CD4-positive, alpha-beta memory T cell (primary cell): ENCODE measurements at regions of chr11 and their contacts with region 1.

Region 1: DNA sequence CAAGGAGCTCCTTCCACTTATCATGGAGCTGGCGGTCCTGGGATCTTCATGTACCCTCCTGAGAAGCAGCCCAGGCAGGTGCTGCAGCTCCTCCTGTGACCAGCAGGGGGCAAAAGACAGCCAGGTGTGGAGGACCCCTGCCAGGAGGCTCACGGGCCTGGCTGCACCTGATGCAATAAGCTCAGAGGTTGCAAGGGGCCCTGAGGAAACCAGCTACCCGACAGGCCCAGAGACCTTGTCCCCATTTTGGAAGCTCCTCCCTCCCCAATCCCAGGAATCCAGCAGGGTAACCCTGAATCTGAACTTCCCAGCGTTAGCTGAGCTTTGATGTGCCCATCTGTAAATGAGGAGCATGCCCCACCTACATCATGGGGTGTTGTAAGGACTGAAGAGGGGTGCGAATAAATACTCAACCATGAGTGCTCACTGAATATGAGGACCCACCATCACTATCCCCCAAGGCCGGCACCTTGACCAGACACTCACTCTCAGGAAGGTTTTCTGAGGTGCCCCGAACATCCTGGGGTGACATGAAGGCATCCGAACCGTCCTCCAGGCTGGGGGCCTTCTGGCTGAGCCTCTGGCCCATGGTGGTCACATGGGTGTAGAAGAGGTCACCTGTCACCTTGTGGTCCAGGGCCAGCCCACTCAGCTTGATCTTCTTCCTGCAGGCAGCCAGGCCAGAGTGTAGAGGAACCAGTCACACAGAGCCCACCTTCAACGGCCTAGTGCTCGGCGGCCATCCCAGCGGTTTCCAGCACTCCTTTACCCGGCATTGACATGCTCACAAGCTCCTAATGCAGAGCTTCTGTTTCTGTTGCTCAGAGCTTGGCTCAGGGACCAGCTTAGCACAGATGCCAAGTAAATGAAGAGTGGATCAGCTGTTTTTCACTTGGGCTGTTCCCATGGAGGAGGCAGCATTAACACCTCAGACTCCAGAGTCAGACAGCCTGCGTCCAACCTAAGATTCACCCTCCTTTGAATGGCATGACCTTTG is 21.7 kb downstream of the SLC43A1 start:
- DNase-seq: peak; percentile 64 to 74 (median 67)
- H3K4me3 ChIP-seq: no peak overlapping the region
- H3K4me3 Mint-ChIP-seq: no peak overlapping the region
- H3K27ac ChIP-seq: no peak overlapping the region
- H3K27ac Mint-ChIP-seq: no peak overlapping the region
- H3K4me1 ChIP-seq: no peaks in the 10 kb centered on the region
- H3K4me1 Mint-ChIP-seq: no peaks in the 10 kb centered on the region
- H3K27me3 ChIP-seq: no peaks in the 10 kb centered on the region
- H3K27me3 Mint-ChIP-seq: no peaks in the 10 kb centered on the region

Region 2: GRCh38 chr11:57426929-57427726 is 66.7 kb before region 1 on chr11 and contains the start of gene SLC43A3:
- CTCF ChIA-PET with region 1: interaction called, 14 read pairs
- POLR2A ChIA-PET with region 1: no interaction called
- intact Hi-C with region 1: no loop called
- DNase-seq: peak; percentile 36 to 62 (median 37)
- H3K4me3 ChIP-seq: peak within 1 kb of the TSS; percentile 32 to 58
- H3K4me3 Mint-ChIP-seq: peak within 1 kb of the TSS; percentile 83 to 93 (median 88)
- H3K27ac ChIP-seq: peak within 1 kb of the TSS; percentile 45
- H3K27ac Mint-ChIP-seq: peak within 1 kb of the TSS; percentile 78 to 94 (median 90)
- H3K4me1 ChIP-seq: peaks cover 34% of the 10 kb centered on the region
- H3K4me1 Mint-ChIP-seq: peaks cover 33 to 56% (median 40%) of the 10 kb centered on the region in 4 donors
- H3K27me3 ChIP-seq: no peaks in the 10 kb centered on the region
- H3K27me3 Mint-ChIP-seq: no peaks in the 10 kb centered on the region
- total RNA-seq, gene SLC43A3: 15.1 to 15.6 TPM

Region 3: GRCh38 chr11:57480409-57481137 is 13.2 kb before region 1 on chr11:
- CTCF ChIA-PET with region 1: interaction called, 41 read pairs
- POLR2A ChIA-PET with region 1: interaction called, 3 read pairs
- intact Hi-C with region 1: no loop called
- DNase-seq: peak; percentile 40 to 58 (median 41)
- H3K4me3 ChIP-seq: no peak overlapping the region
- H3K4me3 Mint-ChIP-seq: peak overlapping the region in 1 of 8 donors; percentile 57
- H3K27ac ChIP-seq: no peak overlapping the region
- H3K27ac Mint-ChIP-seq: peak overlapping the region in 3 of 7 donors; percentile 46 to 73 (median 54)
- H3K4me1 ChIP-seq: peaks cover 17% of the 10 kb centered on the region
- H3K4me1 Mint-ChIP-seq: peaks cover 8 to 39% (median 16%) of the 10 kb centered on the region in 4 donors
- H3K27me3 ChIP-seq: peaks cover 7% of the 10 kb centered on the region
- H3K27me3 Mint-ChIP-seq: peaks cover 6 to 10% of the 10 kb centered on the region in 2 donors

Region 4: DNA sequence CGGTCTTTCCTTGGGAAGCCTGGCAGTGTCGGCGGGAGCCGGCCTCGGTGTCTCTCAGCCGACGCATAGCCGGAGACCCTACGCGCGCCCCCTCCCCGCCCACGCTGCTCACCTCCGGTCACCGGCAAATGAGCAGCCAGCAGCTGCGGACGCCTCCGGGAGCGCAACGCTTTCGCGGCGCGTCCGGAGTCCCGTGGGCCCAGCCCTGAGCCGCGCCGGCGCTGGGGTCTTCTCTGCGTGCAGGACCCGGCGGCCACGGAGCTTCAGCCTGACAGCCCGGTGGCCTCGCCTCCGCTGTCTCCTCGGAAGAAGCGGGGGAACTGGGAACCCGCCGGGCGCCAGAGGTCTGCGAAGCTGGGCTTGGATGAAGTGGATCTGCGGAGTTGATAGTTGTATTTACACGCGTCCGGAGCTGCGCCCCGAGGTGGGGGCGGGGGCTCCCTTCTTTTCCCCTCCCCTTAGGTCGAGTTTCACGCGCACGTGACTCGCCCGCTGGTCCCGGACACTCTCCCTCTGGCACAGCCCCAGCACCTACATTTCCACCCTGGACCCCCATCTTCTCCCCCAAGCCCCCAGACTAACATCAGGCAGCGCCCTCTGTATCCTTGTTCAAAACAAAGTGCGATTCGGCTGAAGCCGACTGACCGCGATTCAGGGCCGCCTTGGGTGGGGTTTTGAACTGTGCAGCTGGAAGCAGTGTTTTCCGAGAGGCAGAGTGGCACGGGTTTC is 21.7 kb after region 1 on chr11 and contains the start of gene SLC43A1:
- CTCF ChIA-PET with region 1: interaction called, 848 read pairs
- POLR2A ChIA-PET with region 1: interaction called, 7 read pairs
- intact Hi-C with region 1: no loop called
- DNase-seq: peak in 2 of 5 donors; percentile 10 to 13
- H3K4me3 ChIP-seq: peak within 1 kb of the TSS; percentile 69 to 84
- H3K4me3 Mint-ChIP-seq: peak within 1 kb of the TSS; percentile 97 to 99 (median 98)
- H3K27ac ChIP-seq: peak within 1 kb of the TSS; percentile 43
- H3K27ac Mint-ChIP-seq: peak within 1 kb of the TSS; percentile 78 to 95 (median 89)
- H3K4me1 ChIP-seq: peaks cover 22% of the 10 kb centered on the region
- H3K4me1 Mint-ChIP-seq: peaks cover 17 to 32% (median 26%) of the 10 kb centered on the region in 4 donors
- H3K27me3 ChIP-seq: no peaks in the 10 kb centered on the region
- H3K27me3 Mint-ChIP-seq: no peaks in the 10 kb centered on the region
- total RNA-seq, gene SLC43A1: 18.1 to 21.7 TPM

Region 5: DNA sequence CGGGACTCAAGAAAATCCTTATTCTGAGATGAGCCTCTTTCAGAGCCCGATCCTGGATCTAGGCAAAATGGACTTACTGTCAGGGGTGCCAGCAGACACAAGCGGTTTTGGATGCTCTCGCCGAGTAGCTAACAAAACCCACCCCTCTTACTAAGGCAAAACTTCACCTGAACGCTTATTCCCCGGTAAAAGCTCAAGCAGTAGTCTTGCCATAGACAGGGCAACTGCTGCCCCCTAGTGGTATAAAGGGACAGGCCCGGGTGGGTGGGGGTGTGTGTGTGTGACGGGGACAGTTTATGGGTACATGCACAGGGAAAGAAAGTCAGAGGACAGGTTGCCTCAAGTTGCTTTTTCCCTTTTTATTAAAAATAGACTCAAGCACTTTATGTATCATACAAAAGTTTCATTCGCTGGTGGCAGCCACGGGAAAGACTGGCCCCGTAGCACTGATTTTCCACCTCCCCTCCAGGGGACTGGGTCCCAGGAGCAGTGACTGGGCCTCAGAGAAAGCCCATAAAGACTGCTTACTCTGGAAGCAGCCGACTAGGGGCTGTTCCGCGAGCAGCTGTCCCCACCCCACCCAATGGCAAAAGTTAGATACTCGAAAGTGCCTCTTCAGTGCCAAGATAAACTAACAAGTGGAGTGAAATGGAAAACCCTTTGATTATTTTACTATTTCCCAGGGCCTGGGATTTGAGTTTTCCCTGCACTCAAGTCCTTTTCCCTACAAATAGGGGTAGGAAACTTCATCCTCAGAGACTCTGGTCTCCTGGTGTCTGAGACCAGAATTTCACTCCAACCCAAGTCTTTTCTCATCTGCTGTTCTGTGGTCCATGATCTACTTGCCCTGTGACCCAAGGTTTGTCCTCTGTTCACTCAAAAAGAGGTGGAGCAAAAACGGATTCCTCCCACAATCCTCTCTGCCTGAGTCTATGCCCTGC is 151.2 kb after region 1 on chr11:
- CTCF ChIA-PET with region 1: interaction called, 95 read pairs
- POLR2A ChIA-PET with region 1: interaction called, 3 read pairs
- intact Hi-C with region 1: loop called (anchors 1 kb)
- DNase-seq: peak; percentile 82 to 89 (median 86)
- H3K4me3 ChIP-seq: no peak overlapping the region
- H3K4me3 Mint-ChIP-seq: peak overlapping the region in 1 of 8 donors; percentile 67
- H3K27ac ChIP-seq: no peak overlapping the region
- H3K27ac Mint-ChIP-seq: peak overlapping the region in 2 of 7 donors; percentile 62 to 69
- H3K4me1 ChIP-seq: peaks cover 17% of the 10 kb centered on the region
- H3K4me1 Mint-ChIP-seq: peaks cover 18 to 38% (median 28%) of the 10 kb centered on the region in 4 donors
- H3K27me3 ChIP-seq: peaks cover 37% of the 10 kb centered on the region
- H3K27me3 Mint-ChIP-seq: peaks cover 31 to 50% of the 10 kb centered on the region in 2 donors